B cell (primary cell): ENCODE measurements at regions of chr17 and their contacts with region 1.

Region 1: DNA sequence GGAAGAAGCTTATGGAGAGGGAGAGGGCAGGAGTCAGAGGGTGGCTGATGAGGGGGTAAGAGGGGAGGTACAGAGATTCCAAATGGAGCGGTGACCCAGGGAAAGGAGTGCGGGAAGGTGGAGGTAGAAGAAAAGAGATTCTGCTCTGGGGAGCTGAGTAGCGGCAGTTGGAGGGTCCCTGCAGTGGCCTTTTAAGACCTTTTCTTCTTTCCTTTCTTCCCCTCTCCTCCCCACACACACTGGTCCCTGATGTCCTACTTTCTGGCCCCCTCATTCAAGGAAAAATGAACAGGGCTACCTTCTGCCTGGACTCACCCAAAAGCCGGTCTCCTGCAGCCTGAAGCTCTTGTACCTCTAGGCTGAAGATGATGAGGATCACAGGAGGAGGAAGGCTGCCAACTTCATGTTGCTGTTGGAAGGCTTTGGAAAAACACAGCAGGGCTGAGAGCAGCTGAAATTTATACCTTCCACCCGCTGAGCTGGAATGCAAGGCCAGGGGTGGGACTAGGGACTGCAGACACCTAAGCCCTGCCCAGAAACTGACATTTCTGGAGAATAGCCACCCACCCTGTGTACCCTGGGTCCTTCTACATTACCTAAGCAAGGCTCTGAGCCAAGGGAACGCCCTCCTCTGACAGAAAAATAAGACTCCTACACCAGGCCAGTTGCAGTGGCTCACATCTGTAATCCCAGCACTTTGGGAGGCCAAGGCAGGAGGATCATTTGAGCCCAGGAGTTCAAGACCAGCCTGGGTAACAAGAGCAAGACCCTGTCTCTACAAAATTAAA is 9.4 kb upstream of the HEATR6 start:
- DNase-seq: no peak
- ATAC-seq: no peak
- H3K4me3 ChIP-seq: peak overlapping the region in 2 of 5 experiments; percentile 22 to 25
- H3K4me3 Mint-ChIP-seq: peak overlapping the region; percentile 55
- H3K27ac ChIP-seq: peak overlapping the region; percentile 60 to 63
- H3K27ac Mint-ChIP-seq: peak overlapping the region; percentile 62
- H3K4me1 ChIP-seq: peaks cover 67 to 68% of the 10 kb centered on the region in 2 donors
- H3K4me1 Mint-ChIP-seq: peaks cover 64% of the 10 kb centered on the region
- H3K27me3 ChIP-seq: no peaks in the 10 kb centered on the region
- H3K27me3 Mint-ChIP-seq: no peaks in the 10 kb centered on the region
- CTCF ChIP-seq: no peak

Region 2: GRCh38 chr17:58895118-58895517 is 1193.0 kb before region 1 on chr17:
- CTCF ChIA-PET with region 1: no interaction called
- POLR2A ChIA-PET with region 1: interaction called, 10 read pairs
- intact Hi-C with region 1: no loop called
- DNase-seq: no peak
- ATAC-seq: no peak
- H3K4me3 ChIP-seq: no peak overlapping the region
- H3K4me3 Mint-ChIP-seq: no peak overlapping the region
- H3K27ac ChIP-seq: no peak overlapping the region
- H3K27ac Mint-ChIP-seq: no peak overlapping the region
- H3K4me1 ChIP-seq: no peaks in the 10 kb centered on the region
- H3K4me1 Mint-ChIP-seq: no peaks in the 10 kb centered on the region
- H3K27me3 ChIP-seq: no peaks in the 10 kb centered on the region
- H3K27me3 Mint-ChIP-seq: peaks cover 9% of the 10 kb centered on the region
- CTCF ChIP-seq: no peak

Region 3: GRCh38 chr17:60077672-60078519 is 10.2 kb before region 1 on chr17:
- CTCF ChIA-PET with region 1: interaction called, 50 read pairs
- POLR2A ChIA-PET with region 1: interaction called, 9 read pairs
- intact Hi-C with region 1: loop called (anchors 1 kb)
- DNase-seq: peak; percentile 60
- ATAC-seq: peak; percentile 52
- H3K4me3 ChIP-seq: peak overlapping the region; percentile 45 to 73 (median 61)
- H3K4me3 Mint-ChIP-seq: peak overlapping the region; percentile 94
- H3K27ac ChIP-seq: peak overlapping the region; percentile 55 to 65
- H3K27ac Mint-ChIP-seq: peak overlapping the region; percentile 93
- H3K4me1 ChIP-seq: peaks cover 27 to 32% of the 10 kb centered on the region in 2 donors
- H3K4me1 Mint-ChIP-seq: peaks cover 39% of the 10 kb centered on the region
- H3K27me3 ChIP-seq: no peaks in the 10 kb centered on the region
- H3K27me3 Mint-ChIP-seq: no peaks in the 10 kb centered on the region
- CTCF ChIP-seq: no peak

Region 4: GRCh38 chr17:60392042-60392844 is 304.2 kb after region 1 on chr17 and contains the start of gene USP32:
- CTCF ChIA-PET with region 1: no interaction called
- POLR2A ChIA-PET with region 1: interaction called, 3 read pairs
- intact Hi-C with region 1: loop called (anchors 5 kb)
- DNase-seq: peak; percentile 98
- ATAC-seq: peak; percentile 88
- H3K4me3 ChIP-seq: peak within 1 kb of the TSS; percentile 71 to 95 (median 87)
- H3K4me3 Mint-ChIP-seq: peak within 1 kb of the TSS; percentile 96
- H3K27ac ChIP-seq: peak within 1 kb of the TSS; percentile 92 to 96
- H3K27ac Mint-ChIP-seq: peak within 1 kb of the TSS; percentile 97
- H3K4me1 ChIP-seq: peaks cover 43 to 44% of the 10 kb centered on the region in 2 donors
- H3K4me1 Mint-ChIP-seq: peaks cover 67% of the 10 kb centered on the region
- H3K27me3 ChIP-seq: no peaks in the 10 kb centered on the region
- H3K27me3 Mint-ChIP-seq: no peaks in the 10 kb centered on the region
- CTCF ChIP-seq: no peak
- total RNA-seq, gene USP32: 48.8 and 56.9 TPM in 2 replicates

Region 5: GRCh38 chr17:61783556-61784304 is 1695.7 kb after region 1 on chr17:
- CTCF ChIA-PET with region 1: no interaction called
- POLR2A ChIA-PET with region 1: no interaction called
- intact Hi-C with region 1: loop called (anchors 5 kb)
- DNase-seq: no peak
- ATAC-seq: peak; percentile 45
- H3K4me3 ChIP-seq: peak overlapping the region in 1 of 5 experiments; percentile 37
- H3K4me3 Mint-ChIP-seq: peak overlapping the region; percentile 68
- H3K27ac ChIP-seq: peak overlapping the region; percentile 30 to 71
- H3K27ac Mint-ChIP-seq: peak overlapping the region; percentile 92
- H3K4me1 ChIP-seq: peaks cover 15 to 36% of the 10 kb centered on the region in 2 donors
- H3K4me1 Mint-ChIP-seq: peaks cover 36% of the 10 kb centered on the region
- H3K27me3 ChIP-seq: no peaks in the 10 kb centered on the region
- H3K27me3 Mint-ChIP-seq: no peaks in the 10 kb centered on the region
- CTCF ChIP-seq: no peak